Right ventricle myocardium inferior (tissue), 1 donor: ENCODE measurements at regions of chr5 and their contacts with region 1.

Region 1: DNA sequence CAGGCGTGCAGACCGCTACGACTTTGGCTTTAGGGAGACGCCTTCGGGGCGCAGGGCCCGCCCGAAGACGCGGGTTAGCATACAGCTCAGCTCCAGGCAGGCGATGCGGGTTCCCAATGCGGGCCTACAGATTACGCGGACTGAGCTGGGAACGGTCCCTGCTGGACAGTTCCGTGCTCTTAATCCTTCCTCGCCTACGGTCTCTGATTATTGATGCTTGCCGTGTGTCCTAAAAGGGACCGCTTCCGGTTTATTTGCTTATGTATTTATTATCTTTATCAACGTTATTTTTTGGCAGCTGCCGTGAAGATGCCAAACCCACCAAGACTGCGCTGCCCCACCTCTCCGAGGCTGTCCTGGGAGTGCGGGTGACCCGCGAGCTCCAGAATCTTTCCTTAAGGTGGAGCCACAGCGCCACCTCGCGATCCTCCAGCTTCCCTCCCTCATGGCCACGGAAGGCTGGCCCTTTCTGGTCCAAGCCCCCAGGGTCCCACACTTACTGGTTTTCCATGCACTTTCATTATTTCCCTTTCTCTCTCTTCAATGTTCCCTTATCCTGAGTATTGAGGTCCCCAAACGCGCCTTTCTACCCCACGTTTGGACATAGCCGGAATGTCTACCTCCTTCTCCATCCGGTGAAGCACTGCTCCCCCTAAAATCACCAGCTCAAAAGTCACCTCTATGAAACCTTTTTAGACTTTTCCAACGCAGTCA is 7.0 kb upstream of the EBF1 start:
- DNase-seq: peak; percentile 91
- ATAC-seq: peak; percentile 83

Region 2: GRCh38 chr5:158013939-158014338 is 1092.8 kb before region 1 on chr5:
- intact Hi-C with region 1: loop called (anchors 5 kb)
- DNase-seq: no peak
- ATAC-seq: peak; percentile 70

Region 3: GRCh38 chr5:158074992-158075769 is 1031.5 kb before region 1 on chr5:
- intact Hi-C with region 1: loop called (anchors 5 kb)
- DNase-seq: no peak
- ATAC-seq: peak; percentile 90

Region 4: GRCh38 chr5:158423623-158424200 is 683.0 kb before region 1 on chr5:
- intact Hi-C with region 1: loop called (anchors 10 kb)
- DNase-seq: no peak
- ATAC-seq: peak; percentile 51

Region 5: GRCh38 chr5:158543539-158544387 is 563.0 kb before region 1 on chr5:
- intact Hi-C with region 1: loop called (anchors 10 kb)
- DNase-seq: no peak
- ATAC-seq: peak; percentile 27

Region 6: DNA sequence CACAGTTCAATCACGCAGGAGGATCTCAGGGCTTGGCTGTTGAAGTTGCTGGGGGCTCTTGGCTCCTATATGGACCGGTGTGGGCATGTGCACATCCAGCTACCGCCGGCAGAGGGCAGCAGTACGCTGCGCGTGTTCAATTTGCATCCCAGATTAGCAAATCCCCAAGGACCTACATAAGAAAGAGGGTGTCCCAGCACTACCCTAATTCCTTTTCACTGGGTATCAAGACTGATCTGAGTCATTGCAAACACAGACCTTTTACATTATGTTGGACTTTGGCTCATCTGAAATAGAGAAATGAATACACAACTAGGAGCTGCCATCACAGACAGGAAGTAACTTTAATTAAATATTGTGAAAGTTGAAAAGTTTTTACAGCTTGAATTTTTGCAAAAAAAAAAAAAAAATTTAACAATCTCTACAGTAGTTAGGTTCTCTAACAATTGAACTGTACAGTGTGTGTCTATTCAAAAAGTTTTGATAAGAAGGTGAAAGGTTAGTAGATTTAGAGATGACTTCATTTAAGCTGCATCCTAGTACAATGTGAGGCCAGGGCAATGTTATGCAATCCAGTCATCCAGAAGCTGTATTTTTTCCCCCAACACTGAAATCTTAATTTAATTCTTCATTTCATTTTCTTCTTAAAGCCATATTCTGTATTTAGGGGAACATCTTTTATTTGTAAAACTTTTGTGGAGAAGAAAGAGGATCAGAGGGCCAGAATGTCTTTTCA is 411.0 kb before region 1 on chr5:
- intact Hi-C with region 1: loop called (anchors 1 kb)
- DNase-seq: peak; percentile 84
- ATAC-seq: peak; percentile 62